ENCODE measurements at regions of chr3 and their contacts with region 1.

Region 1: GRCh38 chr3:16884084-16884747 is 539 bp upstream of the PLCL2 start:
- DNase-seq: peak; percentile 59 to 85 (median 68)
- ATAC-seq: peak; percentile 32
- H3K4me3 ChIP-seq: peak overlapping the region; percentile 93
- H3K4me3 Mint-ChIP-seq: peak overlapping the region; percentile 100
- H3K27ac ChIP-seq: peak overlapping the region; percentile 49 to 91
- H3K27ac Mint-ChIP-seq: peak overlapping the region; percentile 98
- H3K4me1 ChIP-seq: peaks cover 15% of the 10 kb centered on the region
- H3K4me1 Mint-ChIP-seq: peaks cover 46% of the 10 kb centered on the region
- H3K27me3 ChIP-seq: no peaks in the 10 kb centered on the region
- H3K27me3 Mint-ChIP-seq: no peaks in the 10 kb centered on the region
- CTCF ChIP-seq: peak; percentile 71

Region 2: DNA sequence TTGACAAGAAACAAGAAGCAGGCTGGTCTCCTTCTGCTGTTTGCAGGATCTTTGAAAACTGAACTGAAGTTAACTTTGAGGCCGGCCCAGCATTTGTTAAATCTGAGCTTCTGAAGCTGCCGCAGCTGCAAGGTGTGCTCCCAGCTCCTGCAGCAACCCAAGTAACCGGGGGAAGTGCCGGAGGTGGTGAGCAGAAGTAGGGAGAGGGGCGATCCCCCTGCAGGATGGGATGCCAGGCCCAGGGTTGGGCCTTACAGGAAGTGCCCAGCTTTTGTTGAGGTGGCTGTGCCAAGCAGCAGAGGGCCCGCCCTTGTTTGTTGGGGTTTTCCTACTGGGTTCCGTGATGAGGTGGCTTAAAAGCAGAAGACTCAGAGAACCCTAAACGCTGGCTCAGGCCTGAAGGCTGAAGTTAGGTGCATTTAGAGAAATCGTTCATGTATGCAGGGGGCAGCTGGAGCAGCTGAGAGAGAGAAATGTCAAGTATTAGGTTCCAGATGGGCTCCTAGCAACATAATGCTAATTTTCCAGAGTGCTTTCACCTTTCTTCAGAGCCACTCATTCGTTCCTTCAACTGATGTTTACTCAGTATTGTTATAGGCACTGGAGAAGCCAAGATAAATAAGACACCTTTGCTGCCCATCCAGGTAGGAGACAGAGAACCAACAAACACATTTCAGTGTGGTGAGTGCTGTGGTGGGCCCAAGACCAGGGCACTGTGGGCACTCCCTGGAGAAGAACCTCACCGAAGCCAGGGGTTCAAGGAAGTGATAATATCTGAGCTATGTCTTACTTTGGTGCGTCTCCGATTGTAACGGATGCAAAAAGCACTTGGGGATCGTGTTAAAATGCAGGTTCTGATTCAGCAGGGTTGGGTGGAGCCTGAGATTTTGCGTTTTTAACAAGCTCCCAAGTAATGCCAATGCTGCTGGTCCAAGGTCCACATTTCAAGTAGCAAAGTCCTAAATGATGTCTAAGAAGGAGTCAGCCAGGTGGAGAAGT is 41.6 kb before region 1 on chr3:
- CTCF ChIA-PET with region 1: interaction called, 15 read pairs
- POLR2A ChIA-PET with region 1: interaction called, 137 read pairs
- intact Hi-C with region 1: loop called (anchors 1 to 5 kb)
- DNase-seq: peak; percentile 56 to 92 (median 71)
- ATAC-seq: peak; percentile 87
- H3K4me3 ChIP-seq: peak overlapping the region; percentile 50
- H3K4me3 Mint-ChIP-seq: peak overlapping the region; percentile 88
- H3K27ac ChIP-seq: peak overlapping the region; percentile 68 to 92
- H3K27ac Mint-ChIP-seq: peak overlapping the region; percentile 97
- H3K4me1 ChIP-seq: peaks cover 61% of the 10 kb centered on the region
- H3K4me1 Mint-ChIP-seq: peaks cover 89% of the 10 kb centered on the region
- H3K27me3 ChIP-seq: no peaks in the 10 kb centered on the region
- H3K27me3 Mint-ChIP-seq: no peaks in the 10 kb centered on the region
- CTCF ChIP-seq: no peak

Region 3: GRCh38 chr3:16869035-16870005 is 14.9 kb before region 1 on chr3:
- CTCF ChIA-PET with region 1: interaction called, 11 read pairs
- POLR2A ChIA-PET with region 1: interaction called, 3 read pairs
- intact Hi-C with region 1: no loop called
- DNase-seq: no peak
- ATAC-seq: no peak
- H3K4me3 ChIP-seq: no peak overlapping the region
- H3K4me3 Mint-ChIP-seq: no peak overlapping the region
- H3K27ac ChIP-seq: no peak overlapping the region
- H3K27ac Mint-ChIP-seq: no peak overlapping the region
- H3K4me1 ChIP-seq: peaks cover 7% of the 10 kb centered on the region
- H3K4me1 Mint-ChIP-seq: peaks cover 13% of the 10 kb centered on the region
- H3K27me3 ChIP-seq: no peaks in the 10 kb centered on the region
- H3K27me3 Mint-ChIP-seq: peaks cover 7% of the 10 kb centered on the region
- CTCF ChIP-seq: no peak

Region 4: GRCh38 chr3:16923112-16923511 is 38.9 kb after region 1 on chr3:
- CTCF ChIA-PET with region 1: no interaction called
- POLR2A ChIA-PET with region 1: interaction called, 4 read pairs
- intact Hi-C with region 1: loop called in 1 of 2 experiments (anchors 5 kb)
- DNase-seq: no peak
- ATAC-seq: no peak
- H3K4me3 ChIP-seq: no peak overlapping the region
- H3K4me3 Mint-ChIP-seq: peak overlapping the region; percentile 13
- H3K27ac ChIP-seq: no peak overlapping the region
- H3K27ac Mint-ChIP-seq: peak overlapping the region; percentile 33
- H3K4me1 ChIP-seq: peaks cover 14% of the 10 kb centered on the region
- H3K4me1 Mint-ChIP-seq: peaks cover 70% of the 10 kb centered on the region
- H3K27me3 ChIP-seq: no peaks in the 10 kb centered on the region
- H3K27me3 Mint-ChIP-seq: no peaks in the 10 kb centered on the region
- CTCF ChIP-seq: no peak

Region 5: DNA sequence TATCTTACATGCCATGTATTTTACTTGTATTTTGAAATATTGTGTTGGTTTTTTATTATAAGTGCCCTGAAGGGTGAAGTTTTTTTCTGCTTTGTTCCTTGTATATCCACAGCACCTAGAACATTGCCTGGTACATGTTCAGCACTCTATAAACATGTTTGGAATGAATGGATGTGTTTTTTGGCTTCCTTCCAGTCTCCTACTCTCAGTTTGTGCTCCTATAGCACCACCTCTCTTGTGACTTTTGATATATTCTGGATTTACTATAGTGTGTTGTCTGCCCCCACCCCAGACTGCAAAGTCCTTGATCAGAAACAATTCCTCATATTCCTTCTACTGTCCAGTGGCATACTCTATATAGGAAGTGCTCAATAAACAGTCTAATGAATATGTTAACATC is 61.1 kb after region 1 on chr3:
- CTCF ChIA-PET with region 1: interaction called, 4 read pairs
- POLR2A ChIA-PET with region 1: interaction called, 3 read pairs
- intact Hi-C with region 1: loop called in 1 of 2 experiments (anchors 5 kb)
- DNase-seq: no peak
- ATAC-seq: no peak
- H3K4me3 ChIP-seq: no peak overlapping the region
- H3K4me3 Mint-ChIP-seq: no peak overlapping the region
- H3K27ac ChIP-seq: no peak overlapping the region
- H3K27ac Mint-ChIP-seq: no peak overlapping the region
- H3K4me1 ChIP-seq: peaks cover 21% of the 10 kb centered on the region
- H3K4me1 Mint-ChIP-seq: peaks cover 77% of the 10 kb centered on the region
- H3K27me3 ChIP-seq: no peaks in the 10 kb centered on the region
- H3K27me3 Mint-ChIP-seq: no peaks in the 10 kb centered on the region
- CTCF ChIP-seq: no peak

Region 6: DNA sequence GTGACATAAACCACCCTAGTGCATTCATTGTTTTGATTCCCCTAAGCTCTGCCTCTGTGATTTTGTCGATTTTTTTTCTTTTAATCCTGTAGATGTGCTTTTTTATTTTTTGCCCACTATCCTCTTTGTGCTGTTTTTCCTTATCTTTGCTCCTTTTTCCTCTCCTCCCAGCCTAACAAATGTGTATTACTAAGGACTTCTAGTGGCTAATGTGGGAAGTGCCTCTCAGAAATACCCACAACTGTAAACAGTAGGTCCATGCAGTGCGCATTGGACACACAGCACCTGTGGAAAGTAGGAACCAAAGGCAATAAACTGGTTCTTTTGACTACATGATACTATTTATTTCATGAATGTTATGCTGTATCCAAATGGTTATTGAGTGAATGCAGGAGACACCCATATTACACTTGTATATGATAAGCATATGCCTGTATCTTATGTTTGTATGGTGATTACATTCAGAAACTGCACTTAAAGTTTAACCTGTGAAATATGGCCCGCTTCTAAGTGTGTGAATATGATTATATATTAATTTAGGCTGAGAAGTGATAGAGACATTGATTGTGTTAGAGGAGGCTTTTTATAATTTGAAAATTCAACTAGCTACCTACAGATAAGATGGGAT is 148.3 kb after region 1 on chr3:
- CTCF ChIA-PET with region 1: interaction called, 3 read pairs
- POLR2A ChIA-PET with region 1: interaction called, 4 read pairs
- intact Hi-C with region 1: loop called in 1 of 2 experiments (anchors 2 kb)
- DNase-seq: peak in 2 of 14 experiments; percentile 16 to 19
- ATAC-seq: no peak
- H3K4me3 ChIP-seq: no peak overlapping the region
- H3K4me3 Mint-ChIP-seq: no peak overlapping the region
- H3K27ac ChIP-seq: no peak overlapping the region
- H3K27ac Mint-ChIP-seq: no peak overlapping the region
- H3K4me1 ChIP-seq: peaks cover 17% of the 10 kb centered on the region
- H3K4me1 Mint-ChIP-seq: peaks cover 85% of the 10 kb centered on the region
- H3K27me3 ChIP-seq: no peaks in the 10 kb centered on the region
- H3K27me3 Mint-ChIP-seq: no peaks in the 10 kb centered on the region
- CTCF ChIP-seq: peak; percentile 52

Measured in CD4-positive, alpha-beta T cell (primary cell).